SK-N-SH (cell line): ENCODE measurements at regions of chr12 and their contacts with region 1.

Region 1: DNA sequence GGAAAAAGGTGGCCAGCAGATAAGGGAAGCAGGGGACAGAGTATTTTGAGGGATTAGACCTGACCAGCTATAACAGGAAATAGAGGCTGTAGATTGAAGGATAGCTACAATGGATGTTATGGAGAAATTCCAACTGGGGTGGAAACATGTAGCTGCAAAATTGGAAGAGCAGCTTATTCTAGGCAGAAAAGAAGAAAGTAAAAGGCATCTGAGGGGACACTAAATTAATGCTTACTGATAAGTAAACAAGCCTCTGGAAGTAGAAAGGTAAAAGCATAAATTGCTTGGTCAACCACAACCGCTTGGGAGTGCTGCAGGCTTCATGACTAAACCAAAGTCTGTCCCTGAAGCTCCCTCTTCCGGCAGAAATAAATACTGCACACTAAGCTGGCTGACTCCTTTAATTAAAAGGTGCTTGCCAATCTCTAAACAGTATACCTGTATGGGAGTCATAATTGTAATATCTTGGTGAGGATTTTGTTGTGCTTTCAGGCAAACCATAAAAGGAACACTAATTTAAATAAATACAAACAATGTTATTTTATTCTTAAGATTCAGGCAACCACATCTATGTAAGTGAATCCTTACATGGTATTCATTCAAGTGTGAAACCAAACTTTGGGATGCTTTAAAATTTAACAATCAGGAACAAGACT is 7.7 kb downstream of the UBC start:
- DNase-seq: peak; percentile 80
- H3K4me3 ChIP-seq: no peak overlapping the region; a peak in 1 of 4 replicates
- H3K27ac ChIP-seq: no peak overlapping the region; a peak in 1 of 4 replicates
- H3K4me1 ChIP-seq: peaks cover 16 to 24% of the 10 kb centered on the region in 2 experiments
- H3K27me3 ChIP-seq: no peaks in the 10 kb centered on the region
- CTCF ChIP-seq: peak; percentile 99
- EP300 ChIP-seq: no peak
- RAD21 ChIP-seq: peak; percentile 96

Region 2: GRCh38 chr12:124767066-124767821 is 139.5 kb before region 1 on chr12:
- CTCF ChIA-PET with region 1: interaction called, 13 read pairs
- POLR2A ChIA-PET with region 1: no interaction called
- DNase-seq: peak; percentile 95
- H3K4me3 ChIP-seq: peak overlapping the region in 1 of 2 experiments; percentile 32; a peak in 1 of 4 replicates
- H3K27ac ChIP-seq: 0 out of 4 replicates have a peak overlapping the region, but pooled peaks of 1 of the 2 experiments have one; percentile 3
- H3K4me1 ChIP-seq: peaks cover 4 to 5% of the 10 kb centered on the region in 2 experiments; a peak in 2 of 4 replicates
- H3K27me3 ChIP-seq: no peaks in the 10 kb centered on the region
- CTCF ChIP-seq: peak; percentile 98
- EP300 ChIP-seq: no peak
- RAD21 ChIP-seq: peak; percentile 95

Region 3: GRCh38 chr12:124804011-124804621 is 102.6 kb before region 1 on chr12:
- CTCF ChIA-PET with region 1: interaction called, 15 read pairs
- POLR2A ChIA-PET with region 1: no interaction called
- DNase-seq: peak; percentile 78
- H3K4me3 ChIP-seq: no peak overlapping the region
- H3K27ac ChIP-seq: peak overlapping the region in 1 of 2 experiments; percentile 70; a peak in 2 of 4 replicates
- H3K4me1 ChIP-seq: peaks cover 0 to 41% of the 10 kb centered on the region in 2 experiments; a peak in 1 of 4 replicates
- H3K27me3 ChIP-seq: no peaks in the 10 kb centered on the region
- CTCF ChIP-seq: no peak
- EP300 ChIP-seq: no peak
- RAD21 ChIP-seq: peak; percentile 10; the same call in 1 of the 2 replicates

Region 4: DNA sequence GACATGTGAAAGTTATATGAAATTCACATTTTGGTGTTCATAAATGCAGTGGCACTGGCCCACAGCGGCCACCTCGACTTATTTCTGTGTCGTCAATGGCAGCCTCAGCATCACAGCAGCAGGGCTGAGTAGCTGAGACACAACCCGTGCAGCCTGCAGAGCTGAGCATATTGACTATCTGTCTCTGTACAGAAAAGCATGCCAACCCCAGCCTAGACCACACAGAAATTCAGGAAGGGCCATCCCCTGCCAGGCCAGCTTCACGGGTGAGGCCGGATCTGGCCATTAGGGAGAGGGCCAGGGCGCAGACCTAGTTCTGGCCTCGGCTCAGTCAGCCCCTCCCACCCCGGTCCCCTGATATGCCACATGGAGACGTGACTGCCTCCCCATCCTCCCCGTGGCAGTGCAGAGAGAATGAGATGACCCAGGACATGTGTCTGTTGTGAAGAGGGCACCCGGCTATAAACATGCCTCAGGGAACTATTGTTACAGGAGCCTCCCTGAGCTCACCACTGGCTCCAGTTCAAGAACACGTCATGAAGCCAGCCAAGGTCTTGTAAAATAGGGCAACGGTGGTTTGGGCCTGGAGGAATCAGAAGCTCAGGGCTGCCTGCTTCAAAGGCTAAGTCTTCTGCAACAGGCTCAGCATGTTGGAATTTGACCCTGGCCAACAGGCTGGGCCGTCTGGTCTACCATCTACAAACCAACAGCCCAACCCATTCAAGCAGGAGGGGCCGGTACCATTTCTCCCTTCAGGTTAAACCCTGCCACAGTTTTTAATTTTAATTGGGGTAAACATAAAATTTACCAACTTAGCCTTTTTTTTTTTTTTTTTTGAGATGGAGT is 68.6 kb before region 1 on chr12:
- CTCF ChIA-PET with region 1: interaction called, 11 read pairs
- POLR2A ChIA-PET with region 1: no interaction called
- DNase-seq: peak; percentile 96
- H3K4me3 ChIP-seq: no peak overlapping the region
- H3K27ac ChIP-seq: peak overlapping the region; percentile 53 to 96
- H3K4me1 ChIP-seq: peaks cover 6 to 65% of the 10 kb centered on the region in 2 experiments; a peak in 2 of 4 replicates
- H3K27me3 ChIP-seq: no peaks in the 10 kb centered on the region
- CTCF ChIP-seq: no peak
- EP300 ChIP-seq: peak in 1 of 2 experiments; percentile 89; a peak in 2 of 4 replicates
- RAD21 ChIP-seq: no peak; the same call in 1 of the 2 replicates

Region 5: GRCh38 chr12:124888260-124888659 is 18.5 kb before region 1 on chr12:
- CTCF ChIA-PET with region 1: interaction called, 17 read pairs
- POLR2A ChIA-PET with region 1: no interaction called
- DNase-seq: no peak
- H3K4me3 ChIP-seq: no peak overlapping the region
- H3K27ac ChIP-seq: no peak overlapping the region
- H3K4me1 ChIP-seq: peaks cover 0 to 2% of the 10 kb centered on the region in 2 experiments; a peak in 1 of 4 replicates
- H3K27me3 ChIP-seq: no peaks in the 10 kb centered on the region
- CTCF ChIP-seq: no peak
- EP300 ChIP-seq: no peak
- RAD21 ChIP-seq: no peak

Region 6: GRCh38 chr12:124917135-124917840 is 10.6 kb after region 1 on chr12:
- CTCF ChIA-PET with region 1: interaction called, 22 read pairs
- POLR2A ChIA-PET with region 1: interaction called, 6 read pairs
- DNase-seq: peak; percentile 83
- H3K4me3 ChIP-seq: peak overlapping the region; percentile 43 to 100
- H3K27ac ChIP-seq: peak overlapping the region; percentile 97 to 100
- H3K4me1 ChIP-seq: peaks cover 24 to 44% of the 10 kb centered on the region in 2 experiments; a peak in 3 of 4 replicates
- H3K27me3 ChIP-seq: no peaks in the 10 kb centered on the region
- CTCF ChIP-seq: no peak
- EP300 ChIP-seq: peak; percentile 83 to 94; a peak in 3 of 4 replicates
- RAD21 ChIP-seq: no peak

Region 7: GRCh38 chr12:124940549-124941527 is 34.1 kb after region 1 on chr12:
- CTCF ChIA-PET with region 1: interaction called, 84 read pairs
- POLR2A ChIA-PET with region 1: interaction called, 11 read pairs
- DNase-seq: peak; percentile 82
- H3K4me3 ChIP-seq: peak overlapping the region; percentile 56 to 66
- H3K27ac ChIP-seq: peak overlapping the region; percentile 95 to 99
- H3K4me1 ChIP-seq: peaks cover 11 to 12% of the 10 kb centered on the region in 2 experiments; a peak in 3 of 4 replicates
- H3K27me3 ChIP-seq: no peaks in the 10 kb centered on the region
- CTCF ChIP-seq: peak; percentile 83
- EP300 ChIP-seq: no peak
- RAD21 ChIP-seq: peak; percentile 41; the same call in 1 of the 2 replicates